Calu3 (cell line): ENCODE measurements at regions of chr2 and their contacts with region 1.

Region 1: DNA sequence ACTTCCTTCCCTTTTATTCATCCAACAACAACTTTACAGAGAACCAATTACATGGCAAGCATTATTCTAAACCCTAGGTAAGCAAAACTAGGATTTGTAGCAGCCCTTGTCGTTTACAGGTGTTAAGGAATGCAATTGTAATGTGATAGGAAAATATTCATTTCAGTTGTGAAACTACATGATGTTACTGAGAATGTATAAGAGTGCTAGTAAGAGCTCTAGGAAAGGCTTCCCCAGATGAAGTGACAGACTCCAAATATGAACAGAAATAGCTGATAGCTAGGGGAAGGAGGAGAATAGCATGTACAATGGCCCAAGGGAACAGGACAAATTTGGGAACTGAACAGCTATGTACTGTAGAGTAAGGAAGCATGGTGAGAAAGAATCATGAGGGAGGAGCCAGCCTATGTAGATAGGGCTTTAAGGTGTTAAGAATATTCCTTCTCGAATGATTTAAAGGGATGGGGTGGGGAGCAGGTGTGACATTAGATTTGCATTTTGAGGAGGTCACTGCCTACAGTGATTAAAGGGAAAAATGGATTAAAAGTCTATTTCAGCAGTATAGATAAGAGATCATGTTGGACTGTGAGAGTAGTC is 31.7 kb downstream of the RPE start:
- DNase-seq: no peak
- H3K4me3 Mint-ChIP-seq: no peak overlapping the region
- H3K27ac Mint-ChIP-seq: peak overlapping the region; percentile 12
- H3K4me1 Mint-ChIP-seq: no peaks in the 10 kb centered on the region
- H3K27me3 Mint-ChIP-seq: no peaks in the 10 kb centered on the region
- CTCF ChIP-seq: no peak

Region 2: DNA sequence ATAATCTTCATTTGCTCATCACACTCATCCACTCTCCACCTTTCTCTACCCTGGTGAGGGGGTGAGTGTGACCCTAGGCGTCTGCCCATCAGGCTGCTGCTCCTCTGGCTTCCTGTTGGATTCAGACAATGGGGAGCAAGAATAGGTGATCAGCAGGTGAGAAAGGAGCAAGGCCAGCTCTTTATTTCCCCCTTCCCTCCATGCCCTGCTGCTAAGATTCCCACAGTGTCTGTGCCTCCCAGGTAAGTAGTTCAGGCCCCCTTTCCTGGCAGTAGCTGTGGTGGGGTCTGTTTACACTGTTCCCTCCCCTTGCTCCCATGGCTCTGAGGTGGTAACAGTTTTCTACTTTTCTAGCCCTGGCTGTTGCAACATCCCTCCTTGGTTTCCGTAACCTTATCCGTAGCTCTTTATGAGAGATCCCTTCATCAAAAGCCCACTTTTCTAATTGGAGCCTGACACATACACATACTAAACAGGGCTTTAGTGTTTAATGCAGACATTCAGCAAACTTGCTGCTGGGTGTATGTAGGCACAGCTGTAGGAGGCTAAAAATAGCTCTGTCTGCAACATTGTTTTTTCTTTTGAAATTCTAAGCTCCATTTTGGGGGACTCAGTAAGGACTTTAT is 582.9 kb before region 1 on chr2:
- CTCF ChIA-PET with region 1: no interaction called
- intact Hi-C with region 1: no loop called
- DNase-seq: no peak
- H3K4me3 Mint-ChIP-seq: no peak overlapping the region
- H3K27ac Mint-ChIP-seq: no peak overlapping the region
- H3K4me1 Mint-ChIP-seq: no peaks in the 10 kb centered on the region
- H3K27me3 Mint-ChIP-seq: no peaks in the 10 kb centered on the region
- CTCF ChIP-seq: no peak

Region 3: GRCh38 chr2:209818939-209819338 is 215.2 kb before region 1 on chr2:
- CTCF ChIA-PET with region 1: interaction called, 14 read pairs
- intact Hi-C with region 1: no loop called
- DNase-seq: no peak
- H3K4me3 Mint-ChIP-seq: no peak overlapping the region
- H3K27ac Mint-ChIP-seq: no peak overlapping the region
- H3K4me1 Mint-ChIP-seq: no peaks in the 10 kb centered on the region
- H3K27me3 Mint-ChIP-seq: no peaks in the 10 kb centered on the region
- CTCF ChIP-seq: no peak